GM12878 (cell line): ENCODE measurements at regions of chr2 and their contacts with region 1.

Region 1: DNA sequence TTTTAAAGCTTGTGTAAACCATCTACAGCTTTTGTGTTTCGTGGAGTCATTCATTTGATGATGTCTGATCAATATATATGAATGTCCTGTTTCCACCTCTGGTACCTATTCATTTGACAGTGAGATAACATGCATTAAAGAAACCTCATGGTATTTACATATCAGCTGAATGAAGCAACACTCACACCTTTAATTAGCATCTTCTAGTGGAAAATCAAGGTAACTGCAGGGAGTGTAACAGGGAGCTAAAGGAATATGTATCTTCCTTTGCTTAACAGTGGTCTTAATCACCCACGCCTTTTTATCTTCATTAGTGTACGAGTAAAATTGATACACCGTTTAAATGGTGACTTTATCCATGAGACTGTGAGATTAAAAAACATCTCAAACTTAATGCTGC is 15.6 kb downstream of the SLC39A10 start:
- DNase-seq: no peak
- ATAC-seq: no peak
- H3K4me3 ChIP-seq: no peak overlapping the region
- H3K27ac ChIP-seq: no peak overlapping the region
- H3K4me1 ChIP-seq: no peaks in the 10 kb centered on the region
- H3K27me3 ChIP-seq: no peaks in the 10 kb centered on the region
- CTCF ChIP-seq: peak in 2 of 3 experiments; percentile 15 to 22; a peak in 2 of 6 replicates
- EP300 ChIP-seq: no peak
- POLR2A ChIP-seq: no peak
- RAD21 ChIP-seq: no peak

Region 2: DNA sequence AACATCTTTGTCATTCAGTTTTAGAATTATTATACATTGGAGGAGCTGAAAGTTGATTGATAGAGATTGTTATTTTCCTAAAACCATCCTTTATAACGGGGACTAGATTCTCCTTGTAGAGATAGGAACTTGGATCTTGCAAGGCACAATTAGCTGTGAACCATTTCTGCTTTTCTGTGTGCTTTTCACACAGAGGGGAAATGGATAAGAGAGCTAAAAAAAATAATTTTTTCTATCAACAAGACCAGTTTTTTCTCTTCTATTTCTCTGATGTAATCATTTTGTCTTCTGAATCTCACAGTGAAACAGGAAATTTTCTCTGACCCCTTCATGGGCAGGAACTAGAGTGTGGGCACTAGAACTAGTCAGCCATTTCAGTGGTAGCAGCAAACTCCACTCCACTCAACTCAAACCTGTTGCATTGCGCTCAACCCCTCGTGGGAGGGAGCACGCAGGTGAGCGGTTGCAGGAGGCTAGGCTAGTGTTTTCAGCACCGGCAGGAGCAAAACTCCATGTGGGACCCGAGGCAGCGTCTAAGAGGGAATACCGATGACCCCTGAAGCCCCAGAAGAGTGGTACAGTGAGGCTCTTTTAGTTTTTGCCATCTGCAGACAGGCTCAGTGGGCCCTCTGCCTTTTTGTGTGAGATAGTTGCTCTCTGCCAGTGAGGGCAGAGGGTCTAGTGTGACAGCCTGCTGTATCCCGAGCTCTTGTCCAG is 39.7 kb before region 1 on chr2:
- CTCF ChIA-PET with region 1: no interaction called
- POLR2A ChIA-PET with region 1: no interaction called
- RAD21 ChIA-PET with region 1: no interaction called
- SMC1A ChIA-PET with region 1: no interaction called
- in situ Hi-C with region 1: no loop called
- intact Hi-C with region 1: no loop called
- DNase-seq: no peak
- ATAC-seq: no peak
- H3K4me3 ChIP-seq: no peak overlapping the region
- H3K27ac ChIP-seq: no peak overlapping the region
- H3K4me1 ChIP-seq: no peaks in the 10 kb centered on the region
- H3K27me3 ChIP-seq: no peaks in the 10 kb centered on the region
- CTCF ChIP-seq: no peak
- EP300 ChIP-seq: no peak
- POLR2A ChIP-seq: no peak
- RAD21 ChIP-seq: no peak

Region 3: GRCh38 chr2:196059491-196059960 is 386.9 kb after region 1 on chr2:
- CTCF ChIA-PET with region 1: interaction called, 3 read pairs
- POLR2A ChIA-PET with region 1: no interaction called
- RAD21 ChIA-PET with region 1: no interaction called
- SMC1A ChIA-PET with region 1: no interaction called
- in situ Hi-C with region 1: loop called (anchors 5 kb)
- intact Hi-C with region 1: no loop called
- DNase-seq: no peak
- ATAC-seq: no peak
- H3K4me3 ChIP-seq: no peak overlapping the region
- H3K27ac ChIP-seq: no peak overlapping the region
- H3K4me1 ChIP-seq: no peaks in the 10 kb centered on the region
- H3K27me3 ChIP-seq: no peaks in the 10 kb centered on the region
- CTCF ChIP-seq: no peak
- EP300 ChIP-seq: no peak
- POLR2A ChIP-seq: no peak
- RAD21 ChIP-seq: no peak